ENCODE measurements at regions of chr19 and their contacts with region 1.

Region 1: DNA sequence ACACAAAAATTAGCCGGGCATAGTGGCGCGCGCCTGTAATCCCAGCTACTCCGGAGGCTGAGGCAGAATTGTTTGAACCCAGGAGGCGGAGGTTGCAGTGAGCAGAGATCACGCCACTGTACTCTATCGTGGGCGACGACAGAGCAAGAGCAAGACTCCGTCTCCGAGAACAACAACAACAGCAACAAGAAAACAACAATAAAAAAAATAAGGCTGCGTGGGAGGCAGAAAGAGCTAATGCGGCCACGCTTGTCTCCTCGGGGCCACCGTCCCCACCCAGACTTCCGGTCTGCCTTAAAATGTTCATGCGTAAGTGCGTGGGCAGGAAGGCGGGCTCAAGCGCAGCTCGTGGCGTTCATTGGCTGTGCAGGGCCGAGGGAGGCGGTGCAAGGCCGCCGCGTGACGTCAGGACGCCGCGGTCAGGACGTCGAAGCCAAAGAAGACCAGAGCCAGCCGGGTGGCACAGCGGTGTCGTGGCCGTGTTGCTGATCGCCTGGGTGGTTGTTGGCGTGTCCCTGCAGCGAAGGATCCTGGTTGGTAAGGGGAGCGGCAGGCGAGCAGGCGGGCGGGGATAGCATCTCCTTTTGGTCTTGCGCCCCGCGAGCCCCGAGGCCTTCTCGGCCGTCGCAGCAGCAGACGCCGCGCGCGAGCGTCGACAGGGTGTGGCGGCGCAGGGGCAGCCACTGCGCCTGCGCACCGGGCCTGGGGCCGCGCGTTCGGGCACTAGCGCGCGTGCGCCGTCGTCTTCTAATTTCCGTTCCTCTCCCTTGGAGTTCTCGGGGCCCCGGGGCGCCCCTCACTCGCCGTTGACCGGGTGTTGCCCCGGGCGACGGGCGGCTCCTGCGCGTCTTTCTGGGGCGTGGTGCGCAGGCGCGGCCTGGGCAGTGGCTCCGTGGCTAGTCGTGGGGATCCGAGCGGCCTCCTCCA is at the start of gene LENG8:
- DNase-seq: peak; percentile 96
- H3K4me3 Mint-ChIP-seq: peak within 1 kb of the TSS; percentile 99
- H3K27ac Mint-ChIP-seq: peak within 1 kb of the TSS; percentile 98
- H3K4me1 Mint-ChIP-seq: peaks cover 36% of the 10 kb centered on the region
- H3K27me3 Mint-ChIP-seq: no peaks in the 10 kb centered on the region
- total RNA-seq, gene LENG8: 192 and 193 TPM in 2 replicates

Region 2: GRCh38 chr19:54102421-54103169 is 346.4 kb before region 1 on chr19 and contains the start of gene NDUFA3:
- intact Hi-C with region 1: loop called (anchors 1 kb)
- DNase-seq: peak; percentile 98
- H3K4me3 Mint-ChIP-seq: peak within 1 kb of the TSS; percentile 99
- H3K27ac Mint-ChIP-seq: peak within 1 kb of the TSS; percentile 87
- H3K4me1 Mint-ChIP-seq: peaks cover 17% of the 10 kb centered on the region
- H3K27me3 Mint-ChIP-seq: no peaks in the 10 kb centered on the region
- total RNA-seq, gene NDUFA3: 110 and 125 TPM in 2 replicates

Region 3: DNA sequence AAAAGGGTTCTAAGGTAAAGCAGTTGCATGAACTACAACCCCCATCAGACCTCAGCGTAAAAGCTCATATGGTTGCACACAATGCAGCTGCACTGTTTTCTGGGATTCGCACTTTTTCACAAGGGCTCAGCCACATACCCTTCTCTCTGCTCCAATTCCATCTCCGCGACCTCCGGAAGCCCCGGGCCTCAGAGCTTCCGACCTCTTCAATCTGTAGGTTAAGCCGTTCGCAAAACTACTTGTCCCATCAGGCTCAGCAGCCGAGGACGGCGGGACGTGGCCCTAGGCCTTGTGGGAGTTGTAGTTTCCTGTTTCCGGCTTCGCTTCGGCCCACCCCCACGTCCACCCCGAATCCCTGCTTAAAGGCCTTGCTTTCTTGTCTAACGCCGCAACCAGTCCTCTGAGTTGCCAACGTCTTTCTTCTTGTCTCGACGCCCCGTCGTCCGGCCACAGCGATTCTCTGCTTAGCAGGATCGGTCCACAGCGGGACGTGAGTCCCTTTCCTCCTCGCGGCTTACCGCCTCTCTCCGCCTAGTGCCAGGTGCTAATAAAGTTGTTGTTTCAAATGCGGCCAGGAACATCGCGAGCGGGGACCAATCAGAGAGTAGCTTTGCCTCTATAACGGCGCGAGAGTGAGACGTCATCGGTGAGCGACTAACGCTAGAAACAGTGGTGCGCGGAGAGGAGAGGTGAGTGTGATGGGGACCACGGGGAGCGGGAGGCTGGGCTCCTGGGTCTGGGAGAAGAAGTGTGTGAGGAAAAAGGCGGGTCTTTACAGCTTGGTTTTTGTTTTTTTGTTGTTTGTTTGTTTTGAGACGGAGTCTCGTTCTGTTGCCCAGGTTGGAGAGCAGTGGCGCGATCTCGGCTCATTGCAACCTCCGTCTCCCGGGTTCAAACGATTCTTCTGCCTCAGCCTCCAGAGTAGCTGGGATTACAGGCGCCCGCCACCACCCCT is 333.7 kb before region 1 on chr19 and contains the starts of genes PRPF31 and TFPT:
- intact Hi-C with region 1: loop called (anchors 1 kb)
- DNase-seq: peak; percentile 93
- H3K4me3 Mint-ChIP-seq: peak within 1 kb of the TSS; percentile 94
- H3K27ac Mint-ChIP-seq: peak within 1 kb of the TSS; percentile 91
- H3K4me1 Mint-ChIP-seq: peaks cover 32% of the 10 kb centered on the region
- H3K27me3 Mint-ChIP-seq: no peaks in the 10 kb centered on the region
- total RNA-seq, gene PRPF31: 110 and 118 TPM in 2 replicates
- total RNA-seq, gene TFPT: 31.1 and 33.4 TPM in 2 replicates

Region 4: GRCh38 chr19:54430306-54431254 is 18.5 kb before region 1 on chr19:
- intact Hi-C with region 1: loop called (anchors 1 kb)
- DNase-seq: peak; percentile 22
- H3K4me3 Mint-ChIP-seq: peak overlapping the region; percentile 45
- H3K27ac Mint-ChIP-seq: no peak overlapping the region
- H3K4me1 Mint-ChIP-seq: peaks cover 12% of the 10 kb centered on the region
- H3K27me3 Mint-ChIP-seq: peaks cover 12% of the 10 kb centered on the region